Activated B cell treated with CpG ODN at 0.5 μM for 24 hours (primary cell): ENCODE measurements at regions of chr12 and their contacts with region 1.

Region 1: GRCh38 chr12:101919447-101919846 is 42.1 kb downstream of the DRAM1 start:
- DNase-seq: no peak
- ATAC-seq: no peak
- H3K4me3 Mint-ChIP-seq: no peak overlapping the region
- H3K27ac Mint-ChIP-seq: no peak overlapping the region
- H3K4me1 Mint-ChIP-seq: peaks cover 35% of the 10 kb centered on the region
- H3K27me3 Mint-ChIP-seq: no peaks in the 10 kb centered on the region
- CTCF ChIP-seq: no peak

Region 2: DNA sequence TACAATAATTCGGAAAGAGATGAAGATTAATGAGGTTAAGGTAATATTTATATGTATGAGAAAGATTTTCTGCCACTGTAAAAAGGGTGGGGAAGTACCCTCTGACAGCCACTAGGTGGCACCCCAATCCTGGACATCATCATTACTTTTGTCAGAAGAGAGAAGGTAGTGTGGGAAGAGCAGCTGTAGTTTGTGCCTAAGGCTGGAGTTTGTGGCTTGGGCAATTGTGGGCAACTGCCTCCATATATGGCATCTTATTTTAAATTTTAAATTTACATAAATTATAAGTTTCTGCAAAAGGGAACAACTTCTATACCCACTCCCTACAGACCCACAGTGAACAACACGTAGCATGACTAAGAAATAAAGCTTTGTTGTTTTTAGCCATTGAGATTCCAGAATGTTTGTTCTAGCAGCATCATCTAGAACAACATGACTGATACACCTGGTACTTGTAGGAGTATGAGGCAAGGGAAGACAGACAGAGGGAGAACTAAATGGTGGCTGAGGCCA is 145.7 kb before region 1 on chr12:
- CTCF ChIA-PET with region 1: interaction called, 7 read pairs
- POLR2A ChIA-PET with region 1: no interaction called
- intact Hi-C with region 1: loop called (anchors 1 kb)
- DNase-seq: peak; percentile 27
- ATAC-seq: peak; percentile 92
- H3K4me3 Mint-ChIP-seq: no peak overlapping the region
- H3K27ac Mint-ChIP-seq: no peak overlapping the region
- H3K4me1 Mint-ChIP-seq: peaks cover 2% of the 10 kb centered on the region
- H3K27me3 Mint-ChIP-seq: no peaks in the 10 kb centered on the region
- CTCF ChIP-seq: peak; percentile 95

Region 3: GRCh38 chr12:102010265-102010994 is 91.0 kb after region 1 on chr12:
- CTCF ChIA-PET with region 1: no interaction called
- POLR2A ChIA-PET with region 1: no interaction called
- intact Hi-C with region 1: loop called (anchors 1 kb)
- DNase-seq: peak; percentile 23
- ATAC-seq: peak; percentile 96
- H3K4me3 Mint-ChIP-seq: peak overlapping the region; percentile 63
- H3K27ac Mint-ChIP-seq: peak overlapping the region; percentile 96
- H3K4me1 Mint-ChIP-seq: peaks cover 33% of the 10 kb centered on the region
- H3K27me3 Mint-ChIP-seq: no peaks in the 10 kb centered on the region
- CTCF ChIP-seq: no peak

Region 4: DNA sequence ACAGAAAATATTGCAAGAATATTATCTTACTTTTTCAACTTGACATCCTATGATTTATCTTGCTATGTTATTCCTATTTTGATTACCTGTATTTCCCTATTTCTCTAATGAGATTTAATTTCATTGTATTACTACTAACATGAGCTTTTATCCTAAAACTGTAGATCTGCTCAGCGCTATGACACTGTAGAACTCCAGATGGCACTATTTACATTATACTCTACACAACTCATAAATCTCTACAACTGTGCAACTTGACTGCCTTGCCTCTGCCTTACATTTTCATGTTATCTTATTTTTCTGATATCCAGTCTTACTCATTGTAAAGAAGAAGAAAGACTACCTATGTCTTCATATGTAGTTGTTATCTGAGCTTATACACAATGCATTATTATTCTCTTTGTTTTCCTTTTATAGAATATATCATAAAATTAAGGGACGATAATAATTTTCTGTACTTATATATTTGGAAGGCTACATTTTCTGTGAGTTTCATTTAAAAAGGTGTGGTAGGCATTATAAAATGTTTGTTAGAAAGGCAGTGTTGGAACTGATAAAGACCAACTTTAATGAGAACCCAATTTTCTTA is 176.3 kb after region 1 on chr12:
- CTCF ChIA-PET with region 1: interaction called, 3 read pairs
- POLR2A ChIA-PET with region 1: no interaction called
- intact Hi-C with region 1: loop called (anchors 1 kb)
- DNase-seq: no peak
- ATAC-seq: peak; percentile 49
- H3K4me3 Mint-ChIP-seq: no peak overlapping the region
- H3K27ac Mint-ChIP-seq: no peak overlapping the region
- H3K4me1 Mint-ChIP-seq: no peaks in the 10 kb centered on the region
- H3K27me3 Mint-ChIP-seq: no peaks in the 10 kb centered on the region
- CTCF ChIP-seq: no peak

Region 5: GRCh38 chr12:102543494-102544485 is 624.3 kb after region 1 on chr12:
- CTCF ChIA-PET with region 1: no interaction called
- POLR2A ChIA-PET with region 1: no interaction called
- intact Hi-C with region 1: loop called (anchors 1 kb)
- DNase-seq: no peak
- ATAC-seq: no peak
- H3K4me3 Mint-ChIP-seq: no peak overlapping the region
- H3K27ac Mint-ChIP-seq: no peak overlapping the region
- H3K4me1 Mint-ChIP-seq: no peaks in the 10 kb centered on the region
- H3K27me3 Mint-ChIP-seq: peaks cover 7% of the 10 kb centered on the region
- CTCF ChIP-seq: no peak

Region 6: DNA sequence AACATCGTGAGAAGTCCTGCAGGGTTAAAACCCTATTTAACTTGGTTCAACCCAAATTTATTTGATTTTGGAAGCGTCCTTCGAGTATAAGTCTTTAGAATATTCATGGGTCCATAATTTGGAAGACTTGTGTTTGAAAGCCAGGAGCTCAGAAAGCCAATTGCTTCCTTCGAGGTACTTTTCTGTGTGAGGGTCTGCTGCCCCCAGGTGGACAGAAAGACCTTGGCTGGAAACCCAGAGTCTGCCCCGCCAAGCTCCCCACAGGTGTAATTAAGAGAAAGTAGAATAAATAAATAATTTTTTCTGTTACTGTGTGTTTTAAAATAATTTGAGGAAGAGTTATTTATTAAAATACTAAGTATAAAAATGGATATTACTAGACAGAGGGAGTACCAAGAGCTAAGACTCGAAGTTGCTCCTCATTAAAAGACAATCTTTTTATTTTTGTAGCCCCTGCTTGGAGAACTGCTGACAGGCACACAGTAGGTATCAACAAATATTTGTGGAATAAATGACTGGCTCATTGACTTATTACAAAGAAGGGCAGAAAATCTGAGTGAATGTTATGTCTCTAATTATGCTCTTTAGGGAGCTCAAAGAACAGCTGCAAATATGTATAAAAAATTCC is 891.8 kb after region 1 on chr12:
- CTCF ChIA-PET with region 1: no interaction called
- POLR2A ChIA-PET with region 1: no interaction called
- intact Hi-C with region 1: loop called (anchors 2 kb)
- DNase-seq: no peak
- ATAC-seq: no peak
- H3K4me3 Mint-ChIP-seq: no peak overlapping the region
- H3K27ac Mint-ChIP-seq: no peak overlapping the region
- H3K4me1 Mint-ChIP-seq: no peaks in the 10 kb centered on the region
- H3K27me3 Mint-ChIP-seq: peaks cover 9% of the 10 kb centered on the region
- CTCF ChIP-seq: no peak

Region 7: GRCh38 chr12:103249612-103250011 is 1330.2 kb after region 1 on chr12:
- CTCF ChIA-PET with region 1: no interaction called
- POLR2A ChIA-PET with region 1: no interaction called
- intact Hi-C with region 1: no loop called
- DNase-seq: no peak
- ATAC-seq: no peak
- H3K4me3 Mint-ChIP-seq: no peak overlapping the region
- H3K27ac Mint-ChIP-seq: no peak overlapping the region
- H3K4me1 Mint-ChIP-seq: peaks cover 2% of the 10 kb centered on the region
- H3K27me3 Mint-ChIP-seq: no peaks in the 10 kb centered on the region
- CTCF ChIP-seq: no peak